HepG2 (cell line): ENCODE measurements at regions of chr1 and their contacts with region 1.

Region 1: DNA sequence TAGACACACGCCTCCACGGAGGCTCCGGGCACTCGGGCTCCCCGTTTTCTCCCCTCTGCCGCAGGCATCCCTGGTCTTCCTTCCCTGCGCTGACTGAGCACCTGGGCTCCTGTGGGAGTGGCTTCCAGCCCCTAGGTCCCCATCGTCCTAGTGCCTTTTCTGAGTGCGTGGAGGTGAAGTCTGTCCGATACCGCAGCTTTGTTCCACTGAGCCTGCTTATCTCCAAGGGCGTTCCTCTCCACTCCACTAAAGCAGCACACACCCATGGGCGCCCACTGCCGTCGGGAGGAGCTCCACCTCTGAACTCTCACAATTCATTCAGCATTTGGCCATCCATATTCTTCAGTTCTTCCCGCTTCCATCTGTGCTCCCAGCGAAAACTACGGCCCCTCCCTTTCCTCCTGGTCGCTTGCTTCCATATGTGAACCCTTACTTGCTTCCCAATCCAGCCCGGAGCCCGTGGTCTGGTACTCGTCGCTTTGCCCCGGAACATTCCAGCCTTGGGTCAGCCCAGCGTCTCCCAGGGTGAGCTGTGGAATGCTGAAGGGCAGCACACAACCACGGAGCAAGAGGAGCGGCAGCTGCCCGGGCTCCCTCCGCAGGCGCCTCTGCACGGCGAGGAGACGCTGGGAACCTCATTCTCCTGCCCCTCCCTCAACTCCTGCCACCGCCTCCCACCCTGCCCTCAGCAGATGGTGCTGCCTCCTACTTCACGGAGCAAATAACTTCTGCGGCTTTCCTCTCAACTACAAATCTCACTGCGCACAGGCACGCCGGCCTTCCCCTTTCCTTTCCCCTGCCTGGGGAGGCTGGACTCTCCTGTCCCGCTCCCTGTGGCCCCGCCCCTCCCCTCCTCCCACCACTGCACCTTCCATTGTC is 27.5 kb downstream of the ATP8B2 start:
- DNase-seq: no peak
- ATAC-seq: peak; percentile 70
- H3K4me3 ChIP-seq: peak overlapping the region; percentile 52 to 75 (median 55)
- H3K27ac ChIP-seq: no peak overlapping the region
- H3K4me1 ChIP-seq: peaks cover 52% of the 10 kb centered on the region
- H3K27me3 ChIP-seq: peaks cover 0 to 4% of the 10 kb centered on the region in 2 experiments; a peak in 1 of 5 replicates
- CTCF ChIP-seq: peak; percentile 33
- EP300 ChIP-seq: no peak
- POLR2A ChIP-seq: no peak
- RAD21 ChIP-seq: no peak

Region 2: GRCh38 chr1:153404768-153405167 is 948.1 kb before region 1 on chr1:
- CTCF ChIA-PET with region 1: no interaction called
- POLR2A ChIA-PET with region 1: no interaction called
- in situ Hi-C with region 1: no loop called
- intact Hi-C with region 1: no loop called
- DNase-seq: peak; percentile 11
- ATAC-seq: peak; percentile 51; the same call in 2 of the 3 replicates
- H3K4me3 ChIP-seq: no peak overlapping the region
- H3K27ac ChIP-seq: no peak overlapping the region
- H3K4me1 ChIP-seq: no peaks in the 10 kb centered on the region
- H3K27me3 ChIP-seq: peaks cover 1 to 28% of the 10 kb centered on the region in 2 experiments; a peak in 3 of 5 replicates
- CTCF ChIP-seq: peak; percentile 48
- EP300 ChIP-seq: no peak
- POLR2A ChIP-seq: no peak
- RAD21 ChIP-seq: no peak

Region 3: GRCh38 chr1:154442006-154442740 is 89.4 kb after region 1 on chr1:
- CTCF ChIA-PET with region 1: no interaction called
- POLR2A ChIA-PET with region 1: no interaction called
- in situ Hi-C with region 1: no loop called
- intact Hi-C with region 1: loop called (anchors 10 kb)
- DNase-seq: no peak
- ATAC-seq: peak; percentile 85
- H3K4me3 ChIP-seq: no peak overlapping the region
- H3K27ac ChIP-seq: no peak overlapping the region
- H3K4me1 ChIP-seq: peaks cover 19% of the 10 kb centered on the region
- H3K27me3 ChIP-seq: no peaks in the 10 kb centered on the region
- CTCF ChIP-seq: peak; percentile 66
- EP300 ChIP-seq: no peak
- POLR2A ChIP-seq: no peak
- RAD21 ChIP-seq: peak; percentile 41; the same call in 1 of the 2 replicates